ENCODE measurements at regions of chr11 and their contacts with region 1.

Region 1: DNA sequence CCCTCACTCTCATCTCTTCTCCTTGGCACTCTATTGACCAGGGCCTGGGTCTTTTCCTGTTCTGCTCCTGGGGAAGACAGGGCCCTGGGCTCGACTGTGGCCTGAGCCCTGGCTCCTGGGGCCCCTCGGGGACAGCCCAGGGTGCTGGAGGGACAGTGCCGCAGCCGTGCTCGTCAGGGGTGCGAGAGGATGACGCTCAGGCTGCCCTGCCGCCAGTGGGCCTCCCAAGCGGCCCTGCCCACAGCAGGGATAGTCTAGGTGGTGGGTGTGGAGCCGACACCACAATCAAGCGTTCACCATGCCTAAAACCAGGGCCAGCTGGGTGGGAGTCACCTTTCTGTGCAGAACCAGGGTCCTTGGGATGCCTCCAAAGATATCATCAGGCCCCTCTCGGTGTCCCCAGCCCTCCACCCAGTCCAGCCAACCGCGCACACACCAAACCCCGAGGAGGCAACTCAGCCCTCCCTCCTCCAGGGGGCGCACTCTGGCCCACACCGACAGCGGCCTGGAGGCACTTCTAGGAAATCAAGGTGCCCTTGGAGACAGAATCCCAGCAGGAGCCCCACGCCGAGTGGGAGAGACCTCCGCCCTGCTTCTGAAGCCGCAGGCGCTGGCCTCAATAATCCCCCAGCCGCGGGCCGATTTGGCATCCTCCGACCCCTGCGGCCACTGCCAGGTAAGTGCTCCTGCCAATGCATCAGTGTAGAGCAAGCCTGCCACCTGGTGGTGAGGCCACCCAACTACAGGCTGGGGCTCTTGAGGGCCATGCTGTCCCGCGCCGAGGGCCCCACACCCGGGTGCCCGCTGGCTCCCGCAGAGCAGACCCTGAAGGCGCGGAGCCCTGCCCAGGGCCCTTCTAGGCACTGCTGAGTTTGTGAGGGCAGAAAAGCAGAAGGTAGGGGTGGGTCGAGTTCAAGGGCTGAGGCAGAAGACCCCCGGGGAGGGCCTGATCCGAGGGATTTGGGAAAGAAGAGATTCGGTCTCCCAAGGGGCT is 496.4 kb downstream of the BUD13 start:
- DNase-seq: peak; percentile 90
- ATAC-seq: peak; percentile 94
- H3K4me3 Mint-ChIP-seq: no peak overlapping the region
- H3K27ac Mint-ChIP-seq: no peak overlapping the region
- H3K4me1 Mint-ChIP-seq: no peaks in the 10 kb centered on the region
- H3K27me3 Mint-ChIP-seq: peaks cover 17% of the 10 kb centered on the region

Region 2: DNA sequence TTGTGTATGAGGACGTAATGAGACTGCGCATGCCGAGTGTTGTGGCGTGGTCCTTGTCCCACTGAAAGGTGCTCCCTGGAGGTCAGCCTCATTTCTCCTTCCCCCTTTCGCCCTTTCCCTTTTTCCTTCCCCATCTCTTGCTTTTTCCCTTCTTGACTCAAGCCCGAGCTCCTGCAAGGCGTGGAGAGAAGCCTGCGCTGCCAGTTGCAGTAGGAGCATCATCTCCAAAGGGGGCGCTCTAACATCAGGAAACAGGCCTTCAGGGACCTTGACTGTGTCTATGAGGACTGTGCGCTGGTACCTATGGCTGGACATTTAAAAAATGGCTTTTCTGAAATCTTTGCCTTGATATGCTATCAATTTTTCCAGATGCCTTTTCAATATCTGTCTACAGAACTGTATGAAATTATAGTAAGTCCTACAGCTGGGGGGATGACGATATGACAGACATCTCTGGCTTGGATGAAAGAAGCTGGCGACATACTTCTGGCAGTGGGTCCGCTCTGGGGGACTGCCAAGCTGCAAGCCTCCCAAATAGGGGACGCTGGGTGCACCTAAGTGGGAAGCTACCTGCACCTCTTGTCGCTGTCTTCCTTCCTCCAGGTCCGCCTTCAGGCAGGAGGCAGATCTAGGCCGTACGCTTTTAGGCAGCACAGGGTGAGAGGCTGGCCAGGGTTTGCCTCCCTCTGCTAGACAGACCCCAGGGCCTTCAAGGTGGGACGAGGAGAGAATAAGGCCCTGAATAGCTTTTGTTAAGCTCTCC is 1501.6 kb before region 1 on chr11:
- CTCF ChIA-PET with region 1: no interaction called
- POLR2A ChIA-PET with region 1: no interaction called
- intact Hi-C with region 1: loop called in 1 of 2 experiments (anchors 10 kb)
- DNase-seq: peak; percentile 47
- ATAC-seq: no peak
- H3K4me3 Mint-ChIP-seq: no peak overlapping the region
- H3K27ac Mint-ChIP-seq: no peak overlapping the region
- H3K4me1 Mint-ChIP-seq: no peaks in the 10 kb centered on the region
- H3K27me3 Mint-ChIP-seq: peaks cover 24% of the 10 kb centered on the region

Region 3: GRCh38 chr11:115324581-115325432 is 951.5 kb before region 1 on chr11:
- CTCF ChIA-PET with region 1: interaction called, 3 read pairs
- POLR2A ChIA-PET with region 1: no interaction called
- intact Hi-C with region 1: loop called (anchors 1 to 2 kb)
- DNase-seq: peak; percentile 30
- ATAC-seq: peak; percentile 68
- H3K4me3 Mint-ChIP-seq: no peak overlapping the region
- H3K27ac Mint-ChIP-seq: no peak overlapping the region
- H3K4me1 Mint-ChIP-seq: no peaks in the 10 kb centered on the region
- H3K27me3 Mint-ChIP-seq: peaks cover 15% of the 10 kb centered on the region

Region 4: GRCh38 chr11:115334932-115335788 is 941.2 kb before region 1 on chr11:
- CTCF ChIA-PET with region 1: no interaction called
- POLR2A ChIA-PET with region 1: no interaction called
- intact Hi-C with region 1: loop called (anchors 1 to 5 kb)
- DNase-seq: no peak
- ATAC-seq: no peak
- H3K4me3 Mint-ChIP-seq: no peak overlapping the region
- H3K27ac Mint-ChIP-seq: no peak overlapping the region
- H3K4me1 Mint-ChIP-seq: no peaks in the 10 kb centered on the region
- H3K27me3 Mint-ChIP-seq: peaks cover 3% of the 10 kb centered on the region

Region 5: GRCh38 chr11:116217006-116217405 is 59.3 kb before region 1 on chr11:
- CTCF ChIA-PET with region 1: interaction called, 3 read pairs
- POLR2A ChIA-PET with region 1: no interaction called
- intact Hi-C with region 1: loop called (anchors 1 to 2 kb)
- DNase-seq: peak; percentile 53
- ATAC-seq: no peak
- H3K4me3 Mint-ChIP-seq: no peak overlapping the region
- H3K27ac Mint-ChIP-seq: no peak overlapping the region
- H3K4me1 Mint-ChIP-seq: no peaks in the 10 kb centered on the region
- H3K27me3 Mint-ChIP-seq: peaks cover 4% of the 10 kb centered on the region

Region 6: GRCh38 chr11:116333001-116333616 is 56.8 kb after region 1 on chr11:
- CTCF ChIA-PET with region 1: no interaction called
- POLR2A ChIA-PET with region 1: no interaction called
- intact Hi-C with region 1: loop called in 1 of 2 experiments (anchors 10 kb)
- DNase-seq: no peak
- ATAC-seq: no peak
- H3K4me3 Mint-ChIP-seq: no peak overlapping the region
- H3K27ac Mint-ChIP-seq: no peak overlapping the region
- H3K4me1 Mint-ChIP-seq: no peaks in the 10 kb centered on the region
- H3K27me3 Mint-ChIP-seq: peaks cover 7% of the 10 kb centered on the region

Measured in activated CD4-positive, alpha-beta T cell treated with anti-CD3 and anti-CD28 coated beads for 36 hours (primary cell).